Psoas muscle (tissue), 8 donors: ENCODE measurements at regions of chr12 and their contacts with region 1.

Region 1: GRCh38 chr12:93766796-93767523 is 89.8 kb downstream of the CRADD start:
- DNase-seq: no peak
- ATAC-seq: peak; percentile 50 to 83 (median 59)
- H3K4me3 ChIP-seq: no peak overlapping the region
- H3K27ac ChIP-seq: peak overlapping the region; percentile 46
- H3K4me1 ChIP-seq: peaks cover 30% of the 10 kb centered on the region
- H3K27me3 ChIP-seq: no peaks in the 10 kb centered on the region
- CTCF ChIP-seq: peak; percentile 63

Region 2: GRCh38 chr12:93502802-93503623 is 263.9 kb before region 1 on chr12:
- intact Hi-C with region 1: loop called in 1 of 2 experiments (anchors 10 kb)
- DNase-seq: no peak
- ATAC-seq: peak in 1 of 4 donors; percentile 58
- H3K4me3 ChIP-seq: no peak overlapping the region
- H3K27ac ChIP-seq: no peak overlapping the region
- H3K4me1 ChIP-seq: no peaks in the 10 kb centered on the region
- H3K27me3 ChIP-seq: no peaks in the 10 kb centered on the region
- CTCF ChIP-seq: peak; percentile 86

Region 3: GRCh38 chr12:93550748-93551611 is 216.0 kb before region 1 on chr12:
- intact Hi-C with region 1: no loop called
- DNase-seq: no peak
- ATAC-seq: no peak
- H3K4me3 ChIP-seq: no peak overlapping the region
- H3K27ac ChIP-seq: no peak overlapping the region
- H3K4me1 ChIP-seq: no peaks in the 10 kb centered on the region
- H3K27me3 ChIP-seq: no peaks in the 10 kb centered on the region
- CTCF ChIP-seq: no peak

Region 4: GRCh38 chr12:93979189-93979588 is 212.2 kb after region 1 on chr12:
- intact Hi-C with region 1: loop called in 1 of 2 experiments (anchors 5 kb)
- DNase-seq: no peak
- ATAC-seq: no peak
- H3K4me3 ChIP-seq: no peak overlapping the region
- H3K27ac ChIP-seq: no peak overlapping the region
- H3K4me1 ChIP-seq: peaks cover 10% of the 10 kb centered on the region
- H3K27me3 ChIP-seq: no peaks in the 10 kb centered on the region
- CTCF ChIP-seq: peak; percentile 46

Region 5: DNA sequence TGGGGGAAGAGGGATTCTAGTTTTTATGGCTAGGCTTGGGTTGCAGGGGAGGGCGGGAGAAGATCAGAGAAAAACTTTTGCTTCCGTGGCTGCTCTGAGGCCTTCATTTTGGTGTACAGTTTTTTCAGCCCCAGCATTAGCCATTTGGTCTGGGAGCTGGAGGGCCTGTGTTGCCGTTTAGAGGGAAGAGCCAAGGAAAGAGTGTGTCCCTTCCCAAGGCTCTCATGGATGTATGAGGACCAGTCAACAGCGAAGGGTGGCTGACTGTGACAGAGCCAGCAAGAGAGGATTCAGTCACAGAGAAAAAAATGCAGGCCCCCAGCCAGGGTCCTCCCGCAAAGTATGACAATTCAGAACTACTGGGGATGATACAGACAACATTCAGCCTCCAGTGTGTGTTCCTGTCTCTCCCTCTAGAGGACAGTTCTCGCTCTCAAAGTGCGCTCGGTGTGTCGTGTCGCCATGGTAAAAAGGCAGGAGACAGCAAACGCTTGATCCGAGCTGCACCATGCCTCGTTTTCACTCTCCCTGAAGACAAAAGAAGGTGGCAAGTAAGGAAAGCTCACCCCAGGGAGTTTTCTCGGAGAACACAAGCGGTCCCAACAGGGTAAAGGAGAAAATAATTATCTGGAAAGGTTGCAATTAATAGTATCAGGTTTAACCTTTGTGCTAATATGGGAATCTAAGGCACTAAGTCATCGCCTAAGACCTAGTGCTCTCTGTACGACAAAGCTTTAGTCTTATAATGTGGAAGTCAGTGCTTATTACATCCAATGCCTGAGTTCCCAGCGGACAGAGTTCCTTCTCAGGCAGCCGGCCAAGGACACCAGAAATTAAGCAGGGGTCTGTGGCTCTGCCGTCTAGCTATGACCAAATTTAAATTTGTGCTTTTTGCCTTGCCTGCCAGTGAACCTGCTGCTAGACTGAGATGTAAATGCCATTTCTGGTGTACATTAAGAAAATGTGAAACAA is 224.2 kb after region 1 on chr12:
- intact Hi-C with region 1: loop called in 1 of 2 experiments (anchors 5 kb)
- DNase-seq: peak; percentile 50 to 62
- ATAC-seq: peak; percentile 75 to 98 (median 96)
- H3K4me3 ChIP-seq: peak overlapping the region; percentile 0
- H3K27ac ChIP-seq: no peak overlapping the region
- H3K4me1 ChIP-seq: peaks cover 8% of the 10 kb centered on the region
- H3K27me3 ChIP-seq: no peaks in the 10 kb centered on the region
- CTCF ChIP-seq: peak; percentile 48

Region 6: GRCh38 chr12:94074980-94075928 is 308.3 kb after region 1 on chr12:
- intact Hi-C with region 1: loop called (anchors 5 to 10 kb)
- DNase-seq: peak; percentile 65 to 77
- ATAC-seq: peak; percentile 72 to 90 (median 80)
- H3K4me3 ChIP-seq: peak overlapping the region; percentile 27
- H3K27ac ChIP-seq: peak overlapping the region; percentile 67
- H3K4me1 ChIP-seq: peaks cover 21% of the 10 kb centered on the region
- H3K27me3 ChIP-seq: no peaks in the 10 kb centered on the region
- CTCF ChIP-seq: peak; percentile 60

Region 7: GRCh38 chr12:94101738-94102660 is 335.0 kb after region 1 on chr12:
- intact Hi-C with region 1: loop called in 1 of 2 experiments (anchors 2 kb)
- DNase-seq: peak; percentile 82 to 89
- ATAC-seq: peak; percentile 83 to 92 (median 84)
- H3K4me3 ChIP-seq: peak overlapping the region; percentile 72
- H3K27ac ChIP-seq: no peak overlapping the region
- H3K4me1 ChIP-seq: peaks cover 6% of the 10 kb centered on the region
- H3K27me3 ChIP-seq: peaks cover 0 to 3% (median 0%) of the 10 kb centered on the region in 3 donors
- CTCF ChIP-seq: peak; percentile 84